AG04449 (cell line): ENCODE measurements at regions of chr1 and their contacts with region 1.

Region 1: DNA sequence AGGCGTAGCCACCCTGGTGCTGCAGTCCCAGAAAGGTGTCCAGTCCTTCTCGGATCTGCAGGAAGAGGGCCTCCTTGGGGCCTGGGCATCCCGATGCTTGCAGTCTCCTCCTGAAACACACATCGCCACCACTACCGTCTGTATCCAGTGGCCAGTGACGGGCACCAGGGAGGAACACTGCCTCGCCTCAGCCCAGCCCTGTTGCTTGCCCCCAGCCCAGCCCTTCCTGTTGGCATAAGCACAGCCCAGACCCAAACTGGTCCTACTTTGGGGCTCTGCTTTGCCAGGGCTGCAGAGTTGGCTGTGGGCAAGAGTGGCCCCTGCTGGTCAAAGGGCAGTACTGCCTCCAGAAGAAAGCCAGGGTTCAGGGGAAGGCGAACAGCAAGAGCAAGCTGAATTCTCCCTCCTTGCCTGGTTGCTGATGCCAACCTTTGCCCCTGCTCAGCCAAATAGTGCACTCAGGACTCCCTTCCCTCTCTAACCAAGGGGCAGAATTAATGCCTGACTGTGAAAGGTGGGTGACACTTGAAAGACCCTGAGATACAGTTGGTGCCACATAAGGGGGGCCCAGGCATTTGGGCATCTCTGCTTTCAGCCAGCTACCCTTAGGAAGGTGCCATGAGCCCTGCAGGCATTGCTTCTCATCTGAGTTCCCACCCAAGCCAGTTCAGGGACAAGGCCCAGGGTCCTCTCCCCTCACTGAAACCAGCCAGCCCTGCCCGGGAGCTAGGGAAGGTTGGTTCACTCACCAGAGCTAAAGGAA is 11.1 kb upstream of the ARHGEF2 start:
- DNase-seq: no peak
- H3K4me3 ChIP-seq: peak overlapping the region; percentile 39
- CTCF ChIP-seq: peak; percentile 92

Region 2: DNA sequence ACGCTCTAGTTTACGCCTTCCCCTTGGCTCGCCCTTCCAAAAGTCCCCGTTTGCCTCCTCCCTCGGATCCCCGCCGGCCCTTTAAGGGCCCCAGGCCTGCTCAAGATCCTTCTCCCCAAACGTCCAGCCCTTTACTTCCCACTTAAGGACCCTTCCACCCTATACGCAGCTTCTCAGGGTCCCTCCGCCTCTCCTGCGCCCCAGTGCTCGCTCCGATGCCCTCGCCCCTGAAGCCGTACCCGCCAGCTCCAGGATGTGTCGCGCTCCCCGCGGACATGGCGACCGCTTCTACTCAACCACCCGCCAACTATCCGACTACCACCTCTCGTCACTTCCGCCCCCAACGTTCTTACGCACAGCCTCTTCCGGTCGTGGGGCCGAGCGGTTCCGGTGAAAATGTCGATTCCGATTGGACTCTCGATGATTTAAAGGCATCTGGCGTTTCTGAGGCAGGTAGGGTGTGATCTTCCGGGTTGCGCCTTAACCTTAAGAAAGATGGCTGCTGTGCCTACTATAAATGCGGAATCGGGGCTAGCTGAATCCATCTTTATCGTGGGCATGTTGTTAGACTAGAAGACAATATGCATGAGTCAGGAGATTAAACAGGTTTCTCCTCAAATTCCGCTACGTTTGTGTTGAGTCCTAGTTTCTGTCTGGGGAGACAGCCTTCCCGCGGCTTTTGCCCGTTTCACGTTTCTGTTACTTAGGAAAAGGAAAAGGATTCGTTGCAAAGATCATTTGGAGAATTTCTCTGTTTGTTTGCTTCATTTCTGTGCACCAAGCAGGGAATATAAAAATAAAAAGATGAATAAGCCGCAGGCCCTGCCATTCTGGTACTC is 55.1 kb before region 1 on chr1 and contains the start of gene KHDC4:
- CTCF ChIA-PET with region 1: interaction called, 102 read pairs
- POLR2A ChIA-PET with region 1: interaction called, 3 read pairs
- DNase-seq: peak; percentile 86
- H3K4me3 ChIP-seq: peak within 1 kb of the TSS; percentile 90
- CTCF ChIP-seq: peak; percentile 11

Region 3: DNA sequence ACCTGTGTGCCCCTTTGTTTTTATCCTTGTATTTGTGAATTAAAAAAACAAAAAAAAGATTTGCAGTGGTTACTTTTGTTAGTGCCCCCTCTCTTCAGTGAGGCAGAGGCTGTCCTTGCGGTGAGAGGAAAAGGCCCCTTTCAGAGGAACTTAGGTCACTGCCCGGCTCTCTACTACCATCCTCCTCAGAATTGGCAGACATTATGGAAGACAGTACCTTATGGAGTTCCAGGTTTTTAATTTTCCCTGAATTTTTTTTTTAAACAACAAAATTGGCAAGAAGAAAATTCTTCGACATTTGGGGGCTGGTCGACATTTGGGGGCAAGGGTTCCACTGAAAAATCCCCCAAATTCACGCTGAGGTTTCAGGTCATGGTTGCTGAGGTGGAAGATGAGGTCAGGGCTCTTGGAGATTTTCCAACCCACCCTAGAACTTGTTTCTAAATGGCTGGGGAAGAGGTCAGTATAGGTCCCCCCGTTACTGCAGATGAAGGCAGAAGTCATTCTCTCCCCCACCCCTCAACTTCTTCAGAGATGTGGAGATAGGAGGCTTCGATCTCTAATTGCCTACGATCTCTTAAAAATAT is 42.7 kb before region 1 on chr1:
- CTCF ChIA-PET with region 1: interaction called, 23 read pairs
- POLR2A ChIA-PET with region 1: no interaction called
- DNase-seq: no peak
- H3K4me3 ChIP-seq: no peak overlapping the region
- CTCF ChIP-seq: no peak

Region 4: DNA sequence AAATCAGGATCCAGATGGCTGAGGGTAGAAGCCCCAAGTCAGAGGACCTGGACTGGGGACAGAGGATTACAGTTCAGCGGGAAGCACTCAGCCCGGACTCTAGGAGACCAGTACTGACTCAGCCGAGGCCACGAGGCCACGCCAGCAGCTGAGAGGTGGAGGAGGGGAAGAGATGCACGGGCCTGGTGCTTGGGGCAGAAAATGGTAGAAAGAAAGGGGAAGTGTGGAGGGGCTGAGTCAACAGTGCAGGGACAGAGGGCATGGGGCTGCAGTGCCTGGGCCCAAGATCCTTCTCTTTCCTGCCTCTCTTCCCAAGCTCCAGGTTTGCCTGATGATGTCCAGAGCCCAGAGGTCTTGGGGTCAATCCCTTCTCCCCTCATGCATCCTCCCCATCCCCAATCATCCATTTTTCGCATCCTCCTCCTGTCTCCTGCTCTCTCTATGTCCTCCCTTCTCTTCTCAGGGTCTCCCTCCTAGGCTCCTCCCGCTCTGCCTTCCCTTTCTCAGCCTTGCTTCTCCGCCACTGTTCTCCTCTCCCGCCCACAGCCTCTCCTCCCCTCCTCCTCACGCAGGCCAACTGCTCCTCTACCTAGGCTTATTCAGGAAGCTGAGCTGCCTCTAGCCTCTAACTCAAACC is 18.8 kb before region 1 on chr1:
- CTCF ChIA-PET with region 1: interaction called, 30 read pairs
- POLR2A ChIA-PET with region 1: interaction called, 16 read pairs
- DNase-seq: no peak
- H3K4me3 ChIP-seq: no peak overlapping the region; the same call in none of the 2 replicates
- CTCF ChIP-seq: no peak

Region 5: GRCh38 chr1:156001682-156002171 is 12.3 kb after region 1 on chr1:
- CTCF ChIA-PET with region 1: interaction called, 16 read pairs
- POLR2A ChIA-PET with region 1: no interaction called
- DNase-seq: no peak
- H3K4me3 ChIP-seq: no peak overlapping the region
- CTCF ChIP-seq: no peak

Region 6: DNA sequence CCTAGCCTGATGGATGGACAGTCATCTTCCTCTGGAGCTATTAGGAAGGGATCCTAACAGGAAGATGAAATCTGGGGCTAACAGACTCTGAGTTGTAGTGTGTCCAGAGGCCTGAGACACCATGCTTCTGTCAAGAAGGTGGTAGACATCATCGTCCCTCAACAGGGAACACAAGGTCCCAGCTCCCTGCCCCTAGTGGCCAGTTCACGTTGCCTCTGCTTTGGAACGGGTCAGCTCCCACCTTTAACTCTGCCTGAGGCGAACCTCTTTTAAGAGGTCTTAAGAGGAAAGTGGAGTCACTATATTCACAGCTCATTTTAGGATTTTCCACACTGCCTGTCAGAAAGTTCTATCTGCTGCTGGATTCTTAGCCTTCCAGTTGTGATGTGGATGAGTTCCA is 959.3 kb after region 1 on chr1:
- CTCF ChIA-PET with region 1: no interaction called
- POLR2A ChIA-PET with region 1: no interaction called
- DNase-seq: no peak
- H3K4me3 ChIP-seq: no peak overlapping the region
- CTCF ChIP-seq: peak; percentile 26